ENCODE measurements at regions of chr17 and their contacts with region 1.

Region 1: GRCh38 chr17:17108451-17109049 is 66.3 kb downstream of the MPRIP start:
- DNase-seq: no peak
- CTCF ChIP-seq: no peak

Region 2: DNA sequence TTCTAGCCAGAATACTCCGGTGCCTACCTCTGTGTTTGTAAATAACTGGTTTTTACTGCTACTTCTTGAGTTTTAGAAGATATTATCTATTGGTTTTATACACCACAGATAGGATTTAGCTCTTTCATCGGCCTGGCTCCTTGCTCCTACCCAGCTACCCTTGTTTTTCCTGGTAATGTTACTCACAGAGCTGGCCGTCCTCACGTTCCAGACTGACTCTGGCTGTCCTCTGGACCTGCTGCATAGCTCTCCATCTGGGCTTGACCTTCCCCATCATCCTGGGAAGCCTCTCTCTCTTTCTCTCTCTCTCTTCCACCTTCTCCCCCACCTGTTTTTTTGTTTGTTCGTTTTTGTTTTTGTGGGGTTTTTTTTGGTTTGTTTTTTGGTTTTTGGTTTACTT is 14.8 kb before region 1 on chr17:
- CTCF ChIA-PET with region 1: interaction called, 11 read pairs
- POLR2A ChIA-PET with region 1: no interaction called
- DNase-seq: no peak
- CTCF ChIP-seq: no peak

Region 3: GRCh38 chr17:17129466-17129865 is 20.9 kb after region 1 on chr17:
- CTCF ChIA-PET with region 1: no interaction called
- POLR2A ChIA-PET with region 1: no interaction called
- DNase-seq: no peak
- CTCF ChIP-seq: no peak

Measured in GM10248 (cell line).